GM18951 (cell line): ENCODE measurements at regions of chr1 and their contacts with region 1.

Region 1: GRCh38 chr1:246012341-246012740 is 494.7 kb downstream of the SMYD3 start:
- POLR2A ChIP-seq: no peak

Region 2: GRCh38 chr1:246095443-246095842 is 83.1 kb after region 1 on chr1:
- in situ Hi-C with region 1: no loop called
- POLR2A ChIP-seq: no peak

Region 3: DNA sequence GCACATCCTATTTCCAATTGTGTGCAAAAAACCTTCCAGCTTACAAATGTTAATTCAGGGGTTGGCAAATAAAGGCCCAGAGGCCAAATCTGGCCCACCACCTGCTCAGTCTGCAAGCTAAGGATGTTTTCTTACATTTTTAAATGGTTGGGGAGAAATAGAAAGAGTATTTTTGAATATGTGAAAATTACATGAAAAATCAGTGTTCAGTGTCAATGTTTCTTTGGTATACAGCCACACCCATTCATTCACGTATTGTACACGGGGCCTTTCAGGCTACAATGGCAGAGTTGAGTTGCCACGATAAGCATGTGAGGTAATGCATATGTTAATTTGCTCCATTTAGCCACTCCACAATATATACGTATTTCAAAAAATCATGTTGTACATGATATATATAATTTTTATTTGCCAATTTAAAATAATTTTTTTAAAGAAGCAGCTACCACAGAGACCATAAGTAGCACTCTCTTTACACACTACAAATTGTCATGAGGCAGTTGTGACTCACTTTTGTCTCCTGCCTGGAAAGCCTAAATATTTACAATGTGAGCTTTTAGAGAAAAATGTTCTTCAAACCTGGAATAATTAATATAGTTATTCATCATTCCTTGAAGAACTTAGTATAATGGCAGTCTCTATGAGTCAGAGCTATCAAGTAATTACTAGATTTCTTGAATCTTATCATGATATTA is 305.1 kb after region 1 on chr1:
- in situ Hi-C with region 1: no loop called
- POLR2A ChIP-seq: no peak

Region 4: DNA sequence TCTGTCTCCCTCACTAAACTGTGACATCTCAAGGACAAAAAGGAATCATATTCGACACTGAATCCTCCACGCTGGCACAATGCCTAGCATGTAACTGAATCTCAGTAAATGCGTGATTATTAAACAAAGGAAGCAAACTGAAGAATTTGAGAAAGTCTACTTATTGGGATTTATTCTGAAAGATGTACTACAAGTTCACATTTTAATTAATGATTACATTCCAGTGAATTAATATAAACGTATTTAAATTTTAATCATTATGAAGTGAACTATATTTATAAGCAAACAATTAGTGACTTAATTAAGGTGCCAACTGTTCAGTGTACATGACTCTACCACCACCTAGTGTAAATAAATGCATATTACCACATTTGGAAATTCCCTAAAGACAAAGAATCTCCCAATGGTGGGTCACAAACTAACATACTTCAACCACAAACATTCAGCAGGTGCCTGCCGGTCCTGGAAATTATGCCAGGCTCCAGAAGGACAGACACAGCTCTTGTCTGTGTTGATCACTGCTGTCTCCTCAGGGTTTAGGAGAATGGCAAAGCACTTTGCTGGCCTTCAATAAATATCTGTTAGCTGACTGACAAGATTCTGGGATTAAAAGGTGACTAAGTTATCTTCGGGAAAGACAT is 438.4 kb after region 1 on chr1:
- in situ Hi-C with region 1: loop called (anchors 10 kb)
- POLR2A ChIP-seq: no peak